ENCODE measurements at regions of chr17 and their contacts with region 1.

Region 1: GRCh38 chr17:21511363-21512198 is 135.4 kb downstream of the KCNJ12 start:
- DNase-seq: peak; percentile 73
- CTCF ChIP-seq: peak; percentile 66

Region 2: GRCh38 chr17:21119247-21119918 is 392.2 kb before region 1 on chr17:
- CTCF ChIA-PET with region 1: interaction called, 22 read pairs
- POLR2A ChIA-PET with region 1: no interaction called
- DNase-seq: peak; percentile 78
- CTCF ChIP-seq: peak; percentile 94

Region 3: DNA sequence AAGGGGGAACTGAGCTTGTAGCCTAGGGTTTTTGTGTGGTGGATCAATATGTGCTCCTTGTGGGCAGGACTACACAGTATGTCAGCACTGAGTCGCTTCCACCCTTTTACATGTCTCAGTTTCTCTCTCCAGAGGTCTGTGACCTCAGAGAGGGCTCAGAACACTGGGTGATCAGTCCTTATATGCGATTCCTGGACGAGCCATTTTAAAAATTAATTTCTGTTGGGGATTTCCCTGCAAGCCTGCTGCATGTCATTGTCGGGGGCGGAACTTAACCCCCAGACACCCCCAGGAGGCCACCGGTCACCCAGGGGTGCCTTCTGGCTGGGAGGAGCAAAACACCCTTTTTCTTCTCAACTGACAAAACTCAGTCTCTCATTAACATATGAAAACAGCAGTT is 370.7 kb before region 1 on chr17:
- CTCF ChIA-PET with region 1: no interaction called
- POLR2A ChIA-PET with region 1: no interaction called
- DNase-seq: peak; percentile 39
- CTCF ChIP-seq: no peak

Region 4: GRCh38 chr17:21275579-21276263 is 235.9 kb before region 1 on chr17:
- CTCF ChIA-PET with region 1: interaction called, 31 read pairs
- POLR2A ChIA-PET with region 1: interaction called, 3 read pairs
- DNase-seq: peak; percentile 98
- CTCF ChIP-seq: no peak

Region 5: GRCh38 chr17:21284319-21285163 is 227.0 kb before region 1 on chr17 and contains the start of gene MAP2K3:
- CTCF ChIA-PET with region 1: interaction called, 31 read pairs
- POLR2A ChIA-PET with region 1: interaction called, 3 read pairs
- DNase-seq: peak; percentile 98
- CTCF ChIP-seq: no peak

Region 6: DNA sequence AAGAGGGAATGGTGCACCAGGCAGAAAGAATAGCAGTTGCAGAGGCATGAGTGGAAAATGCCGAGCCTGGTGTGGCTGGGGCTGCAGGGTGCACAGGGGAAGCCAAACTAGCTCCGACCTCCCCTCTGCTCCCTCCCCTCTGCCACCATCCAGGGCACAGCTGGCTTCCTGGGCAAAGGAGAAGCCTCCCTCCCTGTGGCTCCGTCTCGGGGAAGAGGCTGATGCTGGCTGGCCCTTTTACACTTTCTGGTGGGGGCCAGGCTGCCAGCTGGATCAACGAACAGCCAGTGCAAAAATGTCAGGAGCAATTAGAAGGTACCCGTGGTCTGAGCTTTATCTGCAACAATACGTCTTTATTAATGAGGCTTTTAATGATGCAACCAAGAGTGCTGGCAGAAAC is 172.6 kb before region 1 on chr17:
- CTCF ChIA-PET with region 1: no interaction called
- POLR2A ChIA-PET with region 1: no interaction called
- DNase-seq: no peak
- CTCF ChIP-seq: no peak

Region 7: DNA sequence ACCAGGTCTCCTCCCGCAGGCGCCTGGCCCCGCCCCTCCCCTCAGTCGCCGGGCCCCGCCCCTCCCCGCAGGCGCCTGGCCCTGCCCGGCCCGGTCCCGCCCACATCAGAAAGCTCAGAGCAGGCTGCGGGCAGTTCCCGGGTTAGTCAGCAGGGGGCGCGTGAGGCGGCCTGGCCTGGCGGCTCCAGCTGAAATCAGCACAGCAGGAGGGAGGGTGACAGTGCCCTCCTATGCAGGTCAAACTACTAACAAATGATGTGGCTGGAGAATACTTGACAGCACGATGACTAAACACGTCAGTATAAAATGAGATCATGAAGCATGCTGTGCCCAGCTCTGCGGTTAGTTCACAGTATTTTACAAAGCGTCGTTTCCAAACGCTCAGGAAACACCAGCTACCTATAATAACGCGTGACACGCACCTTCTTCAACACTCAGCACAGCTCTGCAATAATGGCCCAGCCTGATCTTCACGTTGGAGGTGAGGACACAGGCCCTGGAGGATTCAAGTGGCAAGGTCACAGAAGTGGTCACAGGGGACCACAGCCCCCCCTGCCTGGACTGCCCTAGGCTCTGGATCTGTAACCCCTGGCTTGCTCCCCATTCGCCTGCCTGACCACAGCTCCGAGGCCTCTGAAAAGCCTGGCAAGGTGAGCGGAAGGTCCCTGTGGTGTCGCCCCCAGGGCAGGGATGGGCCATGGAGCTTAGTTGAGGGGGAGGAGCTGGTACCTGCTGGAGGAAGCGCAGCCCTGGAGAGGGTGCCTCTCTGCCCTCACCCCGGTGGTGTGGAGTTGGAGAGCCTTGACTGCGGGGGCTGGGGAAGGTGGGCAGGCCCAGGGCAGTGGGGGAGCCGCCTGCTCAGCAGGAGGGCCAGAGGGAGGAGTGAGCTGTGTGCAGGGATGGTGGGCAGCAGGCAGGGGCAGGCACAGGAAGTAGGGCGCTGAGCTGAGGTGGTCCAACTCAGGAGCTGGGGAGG is 54.2 kb before region 1 on chr17:
- CTCF ChIA-PET with region 1: interaction called, 18 read pairs
- POLR2A ChIA-PET with region 1: no interaction called
- DNase-seq: peak; percentile 89
- CTCF ChIP-seq: peak; percentile 70